ENCODE measurements at regions of chr2 and their contacts with region 1.

Region 1: GRCh38 chr2:120680136-120680761 is 55.4 kb upstream of the GLI2 start:
- DNase-seq: peak; percentile 64 to 77
- ATAC-seq: peak; percentile 82 to 85
- H3K4me3 ChIP-seq: no peak overlapping the region
- H3K27ac ChIP-seq: no peak overlapping the region
- H3K4me1 ChIP-seq: peaks cover 0 to 3% of the 10 kb centered on the region in 2 donors
- H3K27me3 ChIP-seq: peaks cover 0 to 5% (median 0%) of the 10 kb centered on the region in 3 donors
- CTCF ChIP-seq: peak; percentile 61 to 89 (median 73)
- POLR2A ChIP-seq: no peak

Region 2: DNA sequence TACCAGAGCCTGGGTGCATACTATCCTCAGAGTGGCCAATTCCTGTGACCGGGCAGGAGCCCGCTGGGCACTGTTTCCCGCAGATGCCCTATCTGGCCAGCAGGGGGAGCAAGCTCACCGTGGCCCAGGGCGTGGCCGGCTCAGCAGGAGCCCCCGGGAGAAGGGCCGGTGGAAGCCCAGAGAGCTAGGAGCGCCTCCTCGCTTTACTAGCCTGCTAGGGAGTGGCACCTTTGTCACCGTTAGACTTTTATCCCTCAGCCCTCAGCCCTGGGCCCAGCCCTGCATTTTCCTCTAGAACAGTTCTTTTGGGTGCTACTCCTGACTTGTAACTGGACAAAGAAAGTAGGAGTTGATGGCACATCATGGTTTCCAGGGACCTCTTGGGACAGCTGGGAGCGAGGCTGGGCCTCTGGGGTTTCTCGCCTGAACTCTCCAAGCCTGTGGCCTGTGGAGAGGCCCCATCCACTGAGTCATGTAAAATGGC is 977.3 kb before region 1 on chr2:
- in situ Hi-C with region 1: loop called in 1 of 4 experiments (anchors 25 kb)
- intact Hi-C with region 1: no loop called
- DNase-seq: peak; percentile 48 to 57
- ATAC-seq: peak; percentile 72 to 92
- H3K4me3 ChIP-seq: no peak overlapping the region
- H3K27ac ChIP-seq: no peak overlapping the region
- H3K4me1 ChIP-seq: no peaks in the 10 kb centered on the region
- H3K27me3 ChIP-seq: no peaks in the 10 kb centered on the region
- CTCF ChIP-seq: peak; percentile 77 to 99 (median 94)
- POLR2A ChIP-seq: no peak

Region 3: DNA sequence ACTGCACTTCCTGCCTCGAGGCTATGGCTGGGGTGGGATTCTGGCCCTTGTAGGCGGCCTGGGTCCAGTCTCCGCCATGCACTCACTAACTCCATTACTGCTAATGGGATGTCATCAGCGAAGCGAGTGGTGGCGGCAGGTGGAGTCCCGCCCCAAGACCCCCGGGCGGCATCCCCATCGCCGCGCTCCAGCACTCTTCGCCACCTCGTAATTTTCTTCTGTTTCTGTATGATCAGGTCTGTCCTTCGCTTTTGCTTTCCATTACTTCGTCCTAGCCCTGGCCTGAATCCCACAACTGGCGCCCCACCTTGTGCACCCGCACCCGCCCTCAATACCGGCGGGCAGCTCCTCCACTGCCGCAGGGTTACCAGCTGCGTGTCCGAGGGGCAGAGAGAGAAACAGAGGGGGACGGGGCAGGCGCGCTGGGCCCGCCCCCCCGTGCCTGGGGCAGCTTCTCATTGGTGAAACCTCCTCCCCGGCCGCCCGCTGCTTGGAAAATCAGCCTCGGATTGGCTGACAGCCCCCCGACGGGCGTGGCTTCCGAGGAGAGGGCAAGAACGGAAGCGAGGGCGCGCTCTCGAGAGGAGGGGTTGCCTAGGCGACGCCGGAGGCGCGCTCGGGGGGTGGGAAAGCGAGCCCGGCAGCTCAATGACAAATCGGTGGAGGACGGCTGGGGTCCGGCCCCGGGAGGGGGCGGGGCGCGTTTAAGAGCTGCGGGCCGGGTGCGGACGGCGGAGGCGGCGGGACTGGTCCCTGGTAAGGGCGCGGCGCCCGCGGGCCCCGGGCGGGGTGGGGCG is 427.8 kb before region 1 on chr2 and contains the start of gene RALB:
- in situ Hi-C with region 1: no loop called
- intact Hi-C with region 1: loop called (anchors 10 kb)
- DNase-seq: peak; percentile 98
- ATAC-seq: peak; percentile 89 to 90
- H3K4me3 ChIP-seq: peak within 1 kb of the TSS; percentile 67 to 87 (median 73)
- H3K27ac ChIP-seq: peak within 1 kb of the TSS; percentile 78 to 89 (median 82)
- H3K4me1 ChIP-seq: peaks cover 9 to 38% of the 10 kb centered on the region in 2 donors
- H3K27me3 ChIP-seq: no peaks in the 10 kb centered on the region
- CTCF ChIP-seq: no peak
- POLR2A ChIP-seq: peak; percentile 62 to 75
- total RNA-seq, gene RALB: 20.1 to 45.0 (median 30.4) TPM

Region 4: DNA sequence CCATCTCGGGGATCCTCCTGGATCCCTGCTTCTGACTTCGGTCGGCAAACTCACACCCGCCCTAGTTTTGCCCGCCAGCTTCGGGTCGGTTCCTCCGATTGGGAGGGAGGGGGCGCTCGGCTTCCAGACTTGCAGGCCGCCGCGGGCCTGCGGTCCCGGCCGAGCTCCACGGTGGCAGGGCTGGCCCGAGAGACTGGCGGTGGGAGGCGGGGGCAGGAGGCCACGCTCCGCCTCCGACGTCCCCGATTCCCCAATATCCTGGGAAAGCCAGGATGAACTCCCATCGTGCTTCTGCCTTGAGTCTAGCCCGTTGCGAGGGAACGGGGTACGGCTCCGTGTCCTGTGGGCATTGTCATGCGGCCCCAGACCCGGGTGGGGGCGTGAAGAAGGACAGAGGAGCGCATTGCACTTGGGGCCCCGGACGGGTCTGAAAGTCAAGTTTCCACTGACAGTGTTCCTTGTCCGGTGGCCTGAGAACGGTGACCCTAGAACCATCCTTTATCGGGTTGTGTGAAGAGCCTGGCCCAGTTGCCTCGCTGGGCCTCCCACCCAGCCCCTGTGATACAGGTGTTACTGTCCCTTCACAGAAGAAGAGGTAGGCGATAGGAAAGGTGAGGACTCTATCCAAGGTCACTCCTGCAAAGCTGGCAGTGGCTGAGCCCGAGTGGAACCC is 336.7 kb before region 1 on chr2:
- in situ Hi-C with region 1: loop called (anchors 5 kb)
- intact Hi-C with region 1: loop called (anchors 1 kb)
- DNase-seq: peak; percentile 76 to 83
- ATAC-seq: peak; percentile 69 to 70
- H3K4me3 ChIP-seq: peak overlapping the region; percentile 58 to 75 (median 60)
- H3K27ac ChIP-seq: peak overlapping the region in 3 of 4 donors; percentile 52 to 79 (median 63)
- H3K4me1 ChIP-seq: peaks cover 17 to 25% of the 10 kb centered on the region in 2 donors
- H3K27me3 ChIP-seq: peaks cover 23 to 39% (median 38%) of the 10 kb centered on the region in 3 donors
- CTCF ChIP-seq: peak; percentile 89 to 94 (median 93)
- POLR2A ChIP-seq: no peak

Region 5: GRCh38 chr2:120503793-120504571 is 176.3 kb before region 1 on chr2:
- in situ Hi-C with region 1: no loop called
- intact Hi-C with region 1: loop called (anchors 5 kb)
- DNase-seq: peak; percentile 96 to 99
- ATAC-seq: peak; percentile 87 to 88
- H3K4me3 ChIP-seq: peak overlapping the region in 1 of 4 donors; percentile 12
- H3K27ac ChIP-seq: peak overlapping the region; percentile 92 to 97 (median 92)
- H3K4me1 ChIP-seq: peaks cover 25% of the 10 kb centered on the region in 2 donors
- H3K27me3 ChIP-seq: no peaks in the 10 kb centered on the region
- CTCF ChIP-seq: peak in 4 of 5 experiments; percentile 19 to 36 (median 22)
- POLR2A ChIP-seq: peak; percentile 40 to 51

Region 6: GRCh38 chr2:120566331-120567035 is 113.8 kb before region 1 on chr2:
- in situ Hi-C with region 1: no loop called
- intact Hi-C with region 1: loop called (anchors 5 kb)
- DNase-seq: peak; percentile 74 to 85
- ATAC-seq: peak; percentile 91 to 92
- H3K4me3 ChIP-seq: peak overlapping the region in 1 of 4 donors; percentile 4
- H3K27ac ChIP-seq: peak overlapping the region; percentile 35 to 68 (median 49)
- H3K4me1 ChIP-seq: peaks cover 15% of the 10 kb centered on the region in 2 donors
- H3K27me3 ChIP-seq: no peaks in the 10 kb centered on the region
- CTCF ChIP-seq: no peak
- POLR2A ChIP-seq: peak in 1 of 2 donors; percentile 24

Region 7: GRCh38 chr2:120712180-120712681 is 32.0 kb after region 1 on chr2:
- in situ Hi-C with region 1: no loop called
- intact Hi-C with region 1: no loop called
- DNase-seq: no peak
- ATAC-seq: no peak
- H3K4me3 ChIP-seq: no peak overlapping the region
- H3K27ac ChIP-seq: no peak overlapping the region
- H3K4me1 ChIP-seq: no peaks in the 10 kb centered on the region
- H3K27me3 ChIP-seq: no peaks in the 10 kb centered on the region
- CTCF ChIP-seq: no peak
- POLR2A ChIP-seq: no peak

Region 8: GRCh38 chr2:121205321-121205942 is 525.2 kb after region 1 on chr2:
- in situ Hi-C with region 1: no loop called
- intact Hi-C with region 1: no loop called
- DNase-seq: peak; percentile 82 to 89
- ATAC-seq: peak; percentile 93 to 96
- H3K4me3 ChIP-seq: no peak overlapping the region
- H3K27ac ChIP-seq: peak overlapping the region in 3 of 4 donors; percentile 44 to 64 (median 57)
- H3K4me1 ChIP-seq: peaks cover 0 to 11% of the 10 kb centered on the region in 2 donors
- H3K27me3 ChIP-seq: no peaks in the 10 kb centered on the region
- CTCF ChIP-seq: no peak
- POLR2A ChIP-seq: no peak

Region 9: GRCh38 chr2:121272581-121273515 is 592.6 kb after region 1 on chr2:
- in situ Hi-C with region 1: no loop called
- intact Hi-C with region 1: no loop called
- DNase-seq: no peak
- ATAC-seq: no peak
- H3K4me3 ChIP-seq: no peak overlapping the region
- H3K27ac ChIP-seq: no peak overlapping the region
- H3K4me1 ChIP-seq: no peaks in the 10 kb centered on the region
- H3K27me3 ChIP-seq: no peaks in the 10 kb centered on the region
- CTCF ChIP-seq: no peak
- POLR2A ChIP-seq: no peak